Activated naive CD4-positive, alpha-beta T cell treated with anti-CD3 and anti-CD28 coated beads for 36 hours (primary cell): ENCODE measurements at regions of chr2 and their contacts with region 1.

Region 1: GRCh38 chr2:102473020-102473419 is at the start of gene SLC9A4:
- DNase-seq: peak; percentile 79
- H3K4me3 Mint-ChIP-seq: no peak within 1 kb of the TSS
- H3K27ac Mint-ChIP-seq: no peak within 1 kb of the TSS
- H3K4me1 Mint-ChIP-seq: no peaks in the 10 kb centered on the region
- H3K27me3 Mint-ChIP-seq: peaks cover 24% of the 10 kb centered on the region
- total RNA-seq, gene SLC9A4: 0.07 to 0.10 TPM

Region 2: GRCh38 chr2:101577173-101577572 is 895.8 kb before region 1 on chr2:
- CTCF ChIA-PET with region 1: no interaction called
- intact Hi-C with region 1: no loop called
- DNase-seq: no peak
- H3K4me3 Mint-ChIP-seq: no peak overlapping the region
- H3K27ac Mint-ChIP-seq: no peak overlapping the region
- H3K4me1 Mint-ChIP-seq: peaks cover 33% of the 10 kb centered on the region
- H3K27me3 Mint-ChIP-seq: no peaks in the 10 kb centered on the region

Region 3: DNA sequence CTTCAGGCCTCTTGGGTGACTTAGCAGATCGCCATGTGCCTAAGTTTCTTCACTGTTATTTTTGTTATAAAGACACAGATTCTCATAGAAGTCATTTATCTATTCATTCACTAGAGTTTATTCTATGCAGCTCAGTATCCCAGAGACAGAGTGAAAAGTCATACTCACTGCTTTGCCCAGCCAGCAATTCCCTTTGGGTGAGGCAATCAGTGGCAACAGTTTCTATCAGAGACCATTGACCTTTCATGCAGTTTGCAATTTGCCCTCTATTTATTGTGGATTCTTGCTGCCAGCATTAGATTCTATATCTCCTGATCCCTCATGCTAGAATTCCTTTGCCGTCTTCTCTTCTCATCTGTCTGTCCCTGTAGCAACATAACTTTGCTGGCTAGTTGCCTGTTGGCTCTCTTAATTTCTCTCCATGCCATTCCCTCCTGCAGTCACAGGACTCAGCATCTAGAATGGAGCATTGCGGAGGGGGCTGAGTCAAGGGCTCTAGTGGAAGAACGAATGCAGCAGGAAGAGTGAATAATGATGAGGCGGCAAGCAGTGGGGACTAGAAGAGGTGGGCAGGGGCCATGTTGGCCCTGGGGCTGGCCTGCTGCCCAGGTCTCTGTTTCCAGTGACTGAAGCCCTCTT is 12.2 kb after region 1 on chr2:
- CTCF ChIA-PET with region 1: interaction called, 18 read pairs
- intact Hi-C with region 1: no loop called
- DNase-seq: no peak
- H3K4me3 Mint-ChIP-seq: no peak overlapping the region
- H3K27ac Mint-ChIP-seq: no peak overlapping the region
- H3K4me1 Mint-ChIP-seq: no peaks in the 10 kb centered on the region
- H3K27me3 Mint-ChIP-seq: peaks cover 21% of the 10 kb centered on the region

Region 4: DNA sequence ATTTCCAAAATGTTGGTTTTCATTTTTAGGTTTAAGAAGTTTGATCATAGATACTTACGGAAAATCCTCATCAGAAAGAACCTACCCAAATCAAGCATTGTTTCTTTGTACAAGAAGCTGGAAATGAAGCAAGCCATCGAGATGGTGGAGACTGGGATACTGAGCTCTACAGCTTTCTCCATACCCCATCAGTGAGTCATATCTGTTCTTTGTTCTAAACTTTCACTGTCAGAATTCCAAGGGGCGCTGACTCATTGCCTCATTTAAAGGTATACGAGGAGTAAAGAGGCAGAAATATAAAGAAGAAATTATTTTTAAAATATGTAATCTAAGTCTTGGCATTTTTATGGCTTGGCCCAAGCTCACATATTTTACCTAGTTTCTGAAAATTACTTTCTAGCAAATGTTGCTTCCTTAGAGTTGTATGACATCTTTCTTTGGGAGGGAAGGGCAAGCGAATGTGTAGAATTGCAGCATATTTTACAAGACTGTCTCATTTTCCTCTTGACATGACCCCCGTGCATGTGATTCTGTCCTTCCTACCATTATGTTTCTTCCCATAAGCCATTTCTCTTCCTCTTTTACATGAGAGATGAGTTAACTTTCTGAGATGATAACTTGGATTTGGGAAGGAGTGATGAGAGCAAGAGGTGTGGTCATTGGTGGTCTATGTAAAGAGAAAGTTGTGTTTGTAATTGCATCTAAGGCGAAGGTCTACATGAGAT is 41.2 kb after region 1 on chr2:
- CTCF ChIA-PET with region 1: interaction called, 10 read pairs
- intact Hi-C with region 1: loop called (anchors 5 kb)
- DNase-seq: no peak
- H3K4me3 Mint-ChIP-seq: no peak overlapping the region
- H3K27ac Mint-ChIP-seq: no peak overlapping the region
- H3K4me1 Mint-ChIP-seq: peaks cover 10% of the 10 kb centered on the region
- H3K27me3 Mint-ChIP-seq: peaks cover 7% of the 10 kb centered on the region

Region 5: GRCh38 chr2:102592597-102592996 is 119.6 kb after region 1 on chr2:
- CTCF ChIA-PET with region 1: interaction called, 18 read pairs
- intact Hi-C with region 1: loop called (anchors 1 kb)
- DNase-seq: peak; percentile 55
- H3K4me3 Mint-ChIP-seq: no peak overlapping the region
- H3K27ac Mint-ChIP-seq: no peak overlapping the region
- H3K4me1 Mint-ChIP-seq: no peaks in the 10 kb centered on the region
- H3K27me3 Mint-ChIP-seq: peaks cover 13% of the 10 kb centered on the region

Region 6: DNA sequence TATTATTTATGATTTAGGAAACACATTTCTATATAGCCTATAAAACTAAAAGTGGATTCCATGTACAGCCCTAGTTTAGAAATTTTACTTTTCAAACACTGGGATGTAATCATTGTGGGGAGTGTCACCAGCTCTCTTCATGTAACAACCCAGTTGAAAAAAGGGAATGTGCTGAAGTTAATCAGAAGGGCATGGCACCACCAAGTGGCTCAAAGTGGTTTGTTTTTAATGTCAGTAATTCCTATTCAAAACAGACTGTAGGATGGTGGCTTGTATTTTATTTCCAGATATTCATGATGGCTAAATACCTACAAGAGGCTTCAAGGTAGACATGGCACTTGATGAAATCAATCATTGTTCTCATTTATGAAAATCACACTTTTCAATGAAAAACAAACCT is 230.7 kb after region 1 on chr2:
- CTCF ChIA-PET with region 1: interaction called, 26 read pairs
- intact Hi-C with region 1: loop called (anchors 1 kb)
- DNase-seq: peak; percentile 58
- H3K4me3 Mint-ChIP-seq: no peak overlapping the region
- H3K27ac Mint-ChIP-seq: no peak overlapping the region
- H3K4me1 Mint-ChIP-seq: no peaks in the 10 kb centered on the region
- H3K27me3 Mint-ChIP-seq: peaks cover 5% of the 10 kb centered on the region